Endothelial cell of umbilical vein (primary cell): ENCODE measurements at regions of chr9 and their contacts with region 1.

Region 1: DNA sequence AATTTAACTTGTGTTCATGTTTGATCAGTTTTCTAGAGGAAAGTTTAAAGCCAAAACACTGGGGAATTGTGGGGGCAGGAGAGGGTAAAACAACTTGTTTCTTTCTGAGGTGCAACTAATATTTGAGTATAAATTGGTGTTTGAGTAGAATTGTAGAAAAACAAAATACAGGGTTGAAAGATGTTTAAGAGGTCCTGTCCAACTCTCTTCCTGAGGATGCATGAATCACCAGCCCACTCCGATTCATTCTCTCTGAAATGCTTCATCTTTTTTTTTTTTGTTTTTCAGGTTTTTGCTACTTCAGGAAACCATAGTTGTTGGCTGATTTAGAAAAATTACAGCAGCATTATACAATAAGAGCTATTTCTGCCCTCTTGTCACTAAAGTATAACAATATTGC is 42.4 kb upstream of the TMC1 start:
- DNase-seq: peak; percentile 87
- H3K4me3 ChIP-seq: peak overlapping the region in 1 of 3 experiments; percentile 42
- H3K27ac ChIP-seq: peak overlapping the region; percentile 80
- H3K4me1 ChIP-seq: peaks cover 42% of the 10 kb centered on the region
- H3K27me3 ChIP-seq: no peaks in the 10 kb centered on the region
- CTCF ChIP-seq: no peak
- POLR2A ChIP-seq: no peak

Region 2: GRCh38 chr9:71703172-71703872 is 775.6 kb before region 1 on chr9:
- CTCF ChIA-PET with region 1: no interaction called
- POLR2A ChIA-PET with region 1: no interaction called
- dilution Hi-C with region 1: no loop called
- intact Hi-C with region 1: no loop called
- DNase-seq: no peak
- H3K4me3 ChIP-seq: no peak overlapping the region
- H3K27ac ChIP-seq: no peak overlapping the region
- H3K4me1 ChIP-seq: no peaks in the 10 kb centered on the region
- H3K27me3 ChIP-seq: no peaks in the 10 kb centered on the region
- CTCF ChIP-seq: no peak
- POLR2A ChIP-seq: no peak

Region 3: DNA sequence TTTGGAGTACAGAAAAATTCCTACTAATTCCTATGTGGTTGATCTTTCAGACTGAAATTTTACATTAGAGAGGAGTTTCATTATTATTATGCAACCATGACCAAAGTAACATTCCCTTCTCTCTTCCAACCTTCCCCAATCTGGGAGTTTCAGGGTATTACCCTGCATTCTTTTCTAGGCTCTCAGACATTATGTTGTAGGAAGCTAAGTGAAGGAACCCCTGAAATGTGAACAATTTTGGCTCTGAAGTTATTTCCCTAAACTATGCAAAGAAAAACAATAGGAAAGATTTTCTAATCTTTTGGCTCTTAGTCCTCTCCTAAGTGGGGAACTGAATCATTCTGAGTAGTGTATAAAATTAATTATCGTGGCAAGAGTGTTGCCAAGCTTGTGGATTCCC is 50.6 kb before region 1 on chr9:
- CTCF ChIA-PET with region 1: no interaction called
- POLR2A ChIA-PET with region 1: no interaction called
- dilution Hi-C with region 1: no loop called
- intact Hi-C with region 1: no loop called
- DNase-seq: peak; percentile 55
- H3K4me3 ChIP-seq: no peak overlapping the region
- H3K27ac ChIP-seq: no peak overlapping the region
- H3K4me1 ChIP-seq: no peaks in the 10 kb centered on the region
- H3K27me3 ChIP-seq: no peaks in the 10 kb centered on the region
- CTCF ChIP-seq: no peak
- POLR2A ChIP-seq: no peak

Region 4: GRCh38 chr9:72443855-72444254 is 35.1 kb before region 1 on chr9:
- CTCF ChIA-PET with region 1: no interaction called
- POLR2A ChIA-PET with region 1: no interaction called
- dilution Hi-C with region 1: no loop called
- intact Hi-C with region 1: loop called (anchors 2 kb)
- DNase-seq: no peak
- H3K4me3 ChIP-seq: no peak overlapping the region
- H3K27ac ChIP-seq: no peak overlapping the region
- H3K4me1 ChIP-seq: peaks cover 26% of the 10 kb centered on the region
- H3K27me3 ChIP-seq: no peaks in the 10 kb centered on the region
- CTCF ChIP-seq: no peak
- POLR2A ChIP-seq: no peak

Region 5: GRCh38 chr9:72464857-72465592 is 13.9 kb before region 1 on chr9:
- CTCF ChIA-PET with region 1: interaction called, 20 read pairs
- POLR2A ChIA-PET with region 1: no interaction called
- dilution Hi-C with region 1: no loop called
- intact Hi-C with region 1: loop called (anchors 1 kb)
- DNase-seq: peak; percentile 85
- H3K4me3 ChIP-seq: peak overlapping the region in 1 of 3 experiments; percentile 38
- H3K27ac ChIP-seq: peak overlapping the region; percentile 82
- H3K4me1 ChIP-seq: peaks cover 35% of the 10 kb centered on the region
- H3K27me3 ChIP-seq: no peaks in the 10 kb centered on the region
- CTCF ChIP-seq: no peak
- POLR2A ChIP-seq: no peak

Region 6: GRCh38 chr9:72577212-72577753 is 98.3 kb after region 1 on chr9:
- CTCF ChIA-PET with region 1: interaction called, 6 read pairs
- POLR2A ChIA-PET with region 1: no interaction called
- dilution Hi-C with region 1: no loop called
- intact Hi-C with region 1: loop called (anchors 1 kb)
- DNase-seq: peak; percentile 90
- H3K4me3 ChIP-seq: peak overlapping the region in 1 of 3 experiments; percentile 7
- H3K27ac ChIP-seq: peak overlapping the region; percentile 65
- H3K4me1 ChIP-seq: peaks cover 51% of the 10 kb centered on the region
- H3K27me3 ChIP-seq: no peaks in the 10 kb centered on the region
- CTCF ChIP-seq: no peak
- POLR2A ChIP-seq: no peak

Region 7: DNA sequence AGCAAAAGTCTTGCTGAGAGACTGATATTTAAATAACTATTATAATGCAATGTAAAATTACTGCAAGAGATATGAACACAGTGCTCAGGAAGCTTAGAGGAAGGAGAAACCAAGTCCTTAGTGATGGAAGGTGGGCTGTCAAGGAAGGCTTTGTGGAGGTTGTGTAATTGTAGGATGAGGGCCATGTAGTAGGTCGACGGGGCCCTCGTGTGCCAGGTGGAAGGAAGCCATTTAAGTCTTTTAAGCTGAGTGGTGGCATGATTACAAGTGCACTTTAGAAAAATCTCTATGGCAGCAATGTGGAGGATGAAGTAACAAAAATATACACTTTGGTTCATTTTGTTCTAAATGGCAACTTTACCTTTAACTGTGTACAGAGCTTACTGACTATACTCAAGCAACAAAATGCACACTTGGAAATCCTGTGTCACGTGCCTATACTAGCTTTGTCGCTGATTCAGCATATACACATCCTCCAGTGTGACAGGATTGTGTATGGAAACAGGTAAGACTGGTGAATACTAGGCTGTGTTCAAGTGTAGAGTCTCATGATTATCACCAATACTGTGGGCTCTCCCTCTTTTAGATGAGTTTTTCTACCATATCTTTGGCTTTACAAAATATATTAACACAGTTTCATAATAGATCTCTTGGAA is 121.0 kb after region 1 on chr9:
- CTCF ChIA-PET with region 1: no interaction called
- POLR2A ChIA-PET with region 1: no interaction called
- dilution Hi-C with region 1: no loop called
- intact Hi-C with region 1: no loop called
- DNase-seq: no peak
- H3K4me3 ChIP-seq: no peak overlapping the region
- H3K27ac ChIP-seq: no peak overlapping the region
- H3K4me1 ChIP-seq: no peaks in the 10 kb centered on the region
- H3K27me3 ChIP-seq: no peaks in the 10 kb centered on the region
- CTCF ChIP-seq: no peak
- POLR2A ChIP-seq: no peak

Region 8: GRCh38 chr9:72656021-72656420 is 177.1 kb after region 1 on chr9:
- CTCF ChIA-PET with region 1: no interaction called
- POLR2A ChIA-PET with region 1: no interaction called
- dilution Hi-C with region 1: no loop called
- intact Hi-C with region 1: no loop called
- DNase-seq: no peak
- H3K4me3 ChIP-seq: no peak overlapping the region
- H3K27ac ChIP-seq: no peak overlapping the region
- H3K4me1 ChIP-seq: no peaks in the 10 kb centered on the region
- H3K27me3 ChIP-seq: peaks cover 3 to 5% of the 10 kb centered on the region in 2 experiments
- CTCF ChIP-seq: no peak
- POLR2A ChIP-seq: no peak